ENCODE measurements at regions of chr11 and their contacts with region 1.

Region 1: DNA sequence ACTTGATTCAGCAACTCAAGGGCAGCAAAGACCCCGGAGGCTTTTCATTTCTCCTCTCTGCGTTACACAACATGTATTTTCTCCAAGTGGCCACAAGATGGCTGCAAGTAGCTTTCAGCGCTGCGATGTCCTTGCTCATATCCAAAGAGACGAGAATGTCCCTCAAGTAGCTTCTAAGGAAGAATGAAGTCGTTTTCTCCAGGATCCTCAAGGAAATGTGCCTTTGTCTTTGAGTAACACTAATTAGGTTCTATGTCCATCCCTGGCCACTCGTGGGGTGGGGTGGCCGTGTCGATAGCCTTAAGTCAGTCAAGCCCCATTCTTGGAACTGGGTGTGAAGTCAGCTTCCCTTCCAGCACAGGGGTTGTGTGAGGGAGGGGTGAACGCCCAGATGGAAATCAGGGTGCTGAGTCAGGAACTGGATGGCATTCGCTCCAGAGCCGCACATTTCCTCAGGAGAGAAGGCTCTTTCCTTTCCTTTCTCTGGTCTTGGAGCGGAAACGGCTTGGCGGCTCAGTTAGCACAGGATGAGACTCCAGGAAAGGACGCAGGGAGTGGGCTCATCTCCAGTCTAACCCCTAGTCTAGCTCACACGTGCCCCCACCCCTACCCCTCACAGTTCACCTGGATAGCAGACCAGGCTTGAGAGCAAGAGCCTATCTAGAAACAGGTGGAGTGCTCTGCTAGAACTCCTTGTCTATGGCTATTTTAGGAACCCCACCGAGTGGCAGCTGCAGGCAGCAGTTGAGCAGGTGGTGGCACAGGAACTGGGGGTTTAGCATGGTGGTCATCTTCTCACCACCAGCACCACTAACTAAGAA is 44.3 kb downstream of the NNMT start:
- DNase-seq: peak; percentile 86
- H3K4me3 ChIP-seq: peak overlapping the region in 2 of 3 experiments; percentile 22 to 60
- H3K27ac ChIP-seq: peak overlapping the region; percentile 30
- H3K4me1 ChIP-seq: peaks cover 6% of the 10 kb centered on the region
- H3K27me3 ChIP-seq: no peaks in the 10 kb centered on the region
- CTCF ChIP-seq: peak; percentile 73 to 74
- POLR2A ChIP-seq: no peak

Region 2: DNA sequence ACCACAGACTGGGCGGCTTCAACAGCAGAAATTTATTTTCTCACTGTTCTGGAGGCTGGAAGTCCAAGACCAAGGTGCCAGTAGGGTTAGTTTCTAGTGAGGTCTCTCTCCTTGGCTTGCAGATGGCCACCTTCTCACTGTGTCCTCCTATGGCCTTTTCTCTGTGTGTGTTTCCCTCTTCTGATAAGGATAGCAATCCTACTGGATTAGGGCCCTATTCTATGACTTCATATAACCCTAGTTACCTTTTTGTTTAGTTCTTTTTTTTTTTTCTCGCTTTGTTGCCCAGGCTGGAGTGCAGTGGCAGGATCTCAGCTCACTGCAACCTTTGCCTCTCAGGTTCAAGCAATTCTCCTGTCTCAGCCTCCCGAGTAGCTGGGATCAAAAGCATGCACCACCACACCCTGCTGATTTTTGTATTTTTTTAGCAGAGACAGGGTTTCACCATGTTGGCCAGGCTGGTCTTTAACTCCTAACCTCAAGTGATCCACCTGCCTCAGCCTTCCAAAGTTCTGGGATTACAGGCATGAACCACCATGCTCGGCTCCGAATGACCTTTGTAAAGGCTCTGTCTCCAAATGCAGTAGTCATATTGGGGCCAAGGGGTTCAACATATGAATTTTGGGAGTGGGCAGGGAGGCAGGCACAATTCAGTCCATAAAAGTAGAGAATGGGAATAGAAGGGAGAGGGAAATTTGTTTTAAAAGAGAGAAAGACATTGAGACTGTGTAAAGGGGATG is 69.8 kb before region 1 on chr11:
- CTCF ChIA-PET with region 1: no interaction called
- POLR2A ChIA-PET with region 1: no interaction called
- dilution Hi-C with region 1: no loop called
- intact Hi-C with region 1: no loop called
- DNase-seq: no peak
- H3K4me3 ChIP-seq: no peak overlapping the region
- H3K27ac ChIP-seq: no peak overlapping the region
- H3K4me1 ChIP-seq: no peaks in the 10 kb centered on the region
- H3K27me3 ChIP-seq: peaks cover 27 to 33% of the 10 kb centered on the region in 2 experiments
- CTCF ChIP-seq: no peak
- POLR2A ChIP-seq: no peak

Region 3: GRCh38 chr11:114295676-114296604 is 44.6 kb before region 1 on chr11 and contains the start of gene NNMT:
- CTCF ChIA-PET with region 1: interaction called, 12 read pairs
- POLR2A ChIA-PET with region 1: no interaction called
- dilution Hi-C with region 1: no loop called
- intact Hi-C with region 1: loop called (anchors 1 kb)
- DNase-seq: peak; percentile 97
- H3K4me3 ChIP-seq: peak within 1 kb of the TSS; percentile 85 to 99 (median 96)
- H3K27ac ChIP-seq: peak within 1 kb of the TSS; percentile 100
- H3K4me1 ChIP-seq: peaks cover 70% of the 10 kb centered on the region
- H3K27me3 ChIP-seq: no peaks in the 10 kb centered on the region
- CTCF ChIP-seq: peak in 1 of 2 donors; percentile 11
- POLR2A ChIP-seq: peak; percentile 86
- total RNA-seq, gene NNMT: 300 and 330 TPM in 2 replicates

Region 4: DNA sequence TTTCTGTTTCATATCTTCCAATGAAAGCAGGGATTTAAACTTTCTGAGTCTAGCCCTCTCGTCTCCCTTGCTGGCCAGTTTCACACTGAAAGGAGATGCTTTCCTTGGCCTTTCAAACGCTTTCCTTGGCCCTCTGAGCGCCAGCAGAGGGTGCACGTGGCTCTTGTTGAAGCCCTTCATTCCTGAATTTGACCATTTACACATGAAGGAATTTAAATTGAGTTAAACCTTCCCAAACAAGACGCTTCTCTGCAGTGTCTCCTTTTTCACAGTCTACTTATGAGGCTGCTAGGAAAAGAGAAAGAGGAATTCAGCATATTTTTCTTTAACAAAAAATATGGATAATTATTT is 22.8 kb before region 1 on chr11:
- CTCF ChIA-PET with region 1: interaction called, 24 read pairs
- POLR2A ChIA-PET with region 1: no interaction called
- dilution Hi-C with region 1: no loop called
- intact Hi-C with region 1: loop called (anchors 1 kb)
- DNase-seq: peak; percentile 73
- H3K4me3 ChIP-seq: no peak overlapping the region
- H3K27ac ChIP-seq: no peak overlapping the region
- H3K4me1 ChIP-seq: peaks cover 26% of the 10 kb centered on the region
- H3K27me3 ChIP-seq: no peaks in the 10 kb centered on the region
- CTCF ChIP-seq: peak; percentile 50 to 62
- POLR2A ChIP-seq: no peak

Region 5: DNA sequence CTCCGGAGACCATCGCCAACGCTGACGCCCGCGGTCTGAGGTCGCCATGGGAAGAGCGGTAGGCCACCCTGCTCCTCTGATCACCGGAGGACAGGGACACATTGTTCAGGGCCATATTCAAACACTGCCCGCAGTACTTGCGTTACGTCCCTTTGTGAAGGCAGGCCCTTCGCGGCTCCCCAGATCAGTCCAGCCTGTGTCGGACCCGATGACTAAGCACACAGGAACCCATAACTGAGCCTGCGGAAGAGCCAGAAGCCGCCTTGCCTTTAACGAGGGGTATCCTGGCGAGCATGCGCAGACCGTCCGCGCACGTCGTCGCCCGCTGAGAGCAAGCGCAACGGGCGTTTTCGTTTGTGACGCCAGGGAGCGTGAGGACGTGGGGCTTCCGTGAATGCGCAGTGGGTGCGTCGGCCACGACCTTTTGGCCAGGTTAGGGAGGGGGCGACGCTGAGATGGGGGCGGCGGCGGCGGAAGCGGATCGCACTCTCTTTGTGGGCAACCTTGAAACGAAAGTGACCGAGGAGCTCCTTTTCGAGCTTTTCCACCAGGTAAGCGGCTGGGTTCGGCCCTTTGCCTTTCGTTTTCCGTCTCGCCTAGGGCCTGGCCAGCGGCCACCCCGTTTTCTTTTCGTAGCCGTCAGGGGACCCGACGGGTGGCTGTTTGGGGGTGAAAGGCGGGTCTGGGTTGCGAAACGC is 59.8 kb after region 1 on chr11 and contains the starts of genes C11orf71 and RBM7:
- CTCF ChIA-PET with region 1: interaction called, 18 read pairs
- POLR2A ChIA-PET with region 1: no interaction called
- dilution Hi-C with region 1: no loop called
- intact Hi-C with region 1: loop called (anchors 1 kb)
- DNase-seq: peak; percentile 99
- H3K4me3 ChIP-seq: peak within 1 kb of the TSS; percentile 66 to 84 (median 79)
- H3K27ac ChIP-seq: peak within 1 kb of the TSS; percentile 86
- H3K4me1 ChIP-seq: peaks cover 27% of the 10 kb centered on the region
- H3K27me3 ChIP-seq: no peaks in the 10 kb centered on the region
- CTCF ChIP-seq: no peak
- POLR2A ChIP-seq: peak; percentile 98
- total RNA-seq, gene C11orf71: 4.0 and 5.4 TPM in 2 replicates
- total RNA-seq, gene RBM7: 31.3 and 38.4 TPM in 2 replicates

Region 6: GRCh38 chr11:114501901-114502300 is 161.4 kb after region 1 on chr11:
- CTCF ChIA-PET with region 1: no interaction called
- POLR2A ChIA-PET with region 1: no interaction called
- dilution Hi-C with region 1: no loop called
- intact Hi-C with region 1: loop called (anchors 5 kb)
- DNase-seq: no peak
- H3K4me3 ChIP-seq: no peak overlapping the region
- H3K27ac ChIP-seq: no peak overlapping the region
- H3K4me1 ChIP-seq: no peaks in the 10 kb centered on the region
- H3K27me3 ChIP-seq: no peaks in the 10 kb centered on the region
- CTCF ChIP-seq: no peak
- POLR2A ChIP-seq: no peak

Region 7: DNA sequence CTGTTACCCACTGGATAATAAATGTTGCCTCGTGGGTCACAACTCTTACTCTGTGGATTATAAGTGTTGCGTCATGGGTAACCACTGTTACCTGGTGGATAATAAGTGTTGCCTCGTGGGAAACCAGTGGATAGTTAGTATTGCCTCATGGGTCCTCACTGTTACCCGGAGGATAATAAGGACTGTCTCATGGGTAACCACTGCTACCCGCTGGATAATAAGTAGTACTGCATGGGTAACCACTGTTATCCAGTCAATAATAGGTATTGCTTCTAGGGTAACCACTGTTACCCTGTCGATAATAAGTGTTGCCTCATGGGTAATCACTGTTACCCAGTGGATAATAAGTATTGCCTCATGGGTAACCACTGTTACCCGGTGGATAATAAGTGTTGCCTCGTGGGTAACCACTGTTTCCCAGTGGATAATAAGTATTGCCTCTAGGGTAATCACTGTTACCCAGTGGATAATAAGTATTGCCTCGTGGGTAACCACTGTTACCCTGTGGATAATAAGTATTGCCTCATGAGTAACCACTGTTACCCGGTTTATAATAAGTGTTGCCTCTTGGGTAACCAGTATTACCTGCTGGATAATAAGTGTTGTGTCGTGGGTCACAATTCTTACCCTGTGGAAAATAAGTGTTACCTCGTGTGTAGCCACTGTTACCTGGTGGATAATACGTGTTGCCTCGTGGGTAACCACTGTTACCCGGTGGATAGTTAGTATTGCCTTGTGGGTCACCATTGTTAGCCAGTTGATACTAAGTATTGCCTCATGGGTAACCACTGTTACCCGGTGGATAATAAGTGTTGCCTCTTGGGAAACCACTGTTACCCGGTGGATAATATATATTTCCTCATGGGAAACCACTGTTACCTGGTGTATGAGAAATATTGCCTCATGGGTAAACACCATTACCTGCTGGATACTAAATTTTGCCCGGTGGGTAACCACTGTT is 270.7 kb after region 1 on chr11:
- CTCF ChIA-PET with region 1: no interaction called
- POLR2A ChIA-PET with region 1: no interaction called
- dilution Hi-C with region 1: no loop called
- intact Hi-C with region 1: loop called (anchors 1 kb)
- DNase-seq: no peak
- H3K4me3 ChIP-seq: no peak overlapping the region
- H3K27ac ChIP-seq: no peak overlapping the region
- H3K4me1 ChIP-seq: no peaks in the 10 kb centered on the region
- H3K27me3 ChIP-seq: no peaks in the 10 kb centered on the region
- CTCF ChIP-seq: no peak
- POLR2A ChIP-seq: no peak

Measured in endothelial cell of umbilical vein (primary cell).